Heart right ventricle (tissue), 16 donors: ENCODE measurements at regions of chr4 and their contacts with region 1.

Region 1: GRCh38 chr4:68375667-68376559 is 26.0 kb upstream of the YTHDC1 start:
- DNase-seq: peak in 1 of 2 donors; percentile 23
- ATAC-seq: peak in 5 of 8 donors; percentile 47 to 63 (median 56)
- H3K4me3 ChIP-seq: no peak overlapping the region
- H3K27ac ChIP-seq: no peak overlapping the region
- H3K4me1 ChIP-seq: peaks cover 0 to 6% (median 0%) of the 10 kb centered on the region in 9 donors
- H3K27me3 ChIP-seq: peaks cover 0 to 46% (median 25%) of the 10 kb centered on the region in 7 donors
- CTCF ChIP-seq: peak; percentile 58 to 85 (median 78)

Region 2: DNA sequence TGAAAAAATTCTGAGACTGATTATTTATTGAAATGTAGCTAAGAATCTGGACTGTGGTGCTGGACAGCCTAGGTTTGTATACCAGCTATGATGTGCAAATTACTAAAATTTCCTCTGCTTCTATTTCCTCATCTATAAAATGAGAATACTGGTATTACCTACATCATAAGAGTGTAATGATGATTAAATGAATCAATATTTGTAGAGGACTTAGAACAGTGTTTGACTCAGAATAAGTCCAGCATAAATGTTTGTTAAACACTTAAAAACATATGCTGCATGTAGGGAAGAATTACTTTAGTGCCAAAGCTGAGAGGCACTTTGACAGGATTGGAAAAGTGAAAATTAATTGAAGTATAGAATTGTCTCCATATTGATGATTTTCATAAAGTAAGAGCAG is 191.0 kb before region 1 on chr4:
- intact Hi-C with region 1: no loop called
- DNase-seq: no peak
- ATAC-seq: no peak
- H3K4me3 ChIP-seq: no peak overlapping the region
- H3K27ac ChIP-seq: no peak overlapping the region
- H3K4me1 ChIP-seq: no peaks in the 10 kb centered on the region
- H3K27me3 ChIP-seq: no peaks in the 10 kb centered on the region
- CTCF ChIP-seq: no peak

Region 3: GRCh38 chr4:68271851-68272756 is 103.8 kb before region 1 on chr4:
- intact Hi-C with region 1: loop called (anchors 1 to 5 kb)
- DNase-seq: no peak
- ATAC-seq: peak in 5 of 8 donors; percentile 7 to 61 (median 50)
- H3K4me3 ChIP-seq: peak overlapping the region in 6 of 10 donors; percentile 10 to 31 (median 28)
- H3K27ac ChIP-seq: no peak overlapping the region
- H3K4me1 ChIP-seq: peaks cover 0 to 7% (median 0%) of the 10 kb centered on the region in 9 donors
- H3K27me3 ChIP-seq: peaks cover 0 to 17% (median 0%) of the 10 kb centered on the region in 7 donors
- CTCF ChIP-seq: peak; percentile 66 to 82 (median 79)

Region 4: GRCh38 chr4:68342134-68342533 is 33.8 kb before region 1 on chr4:
- intact Hi-C with region 1: loop called in 1 of 10 experiments (anchors 5 kb)
- DNase-seq: peak in 1 of 2 donors; percentile 16
- ATAC-seq: peak in 7 of 8 donors; percentile 26 to 60 (median 50)
- H3K4me3 ChIP-seq: no peak overlapping the region
- H3K27ac ChIP-seq: no peak overlapping the region
- H3K4me1 ChIP-seq: peaks cover 7 to 100% (median 88%) of the 10 kb centered on the region in 9 donors
- H3K27me3 ChIP-seq: no peaks in the 10 kb centered on the region
- CTCF ChIP-seq: no peak